GM23248 (cell line): ENCODE measurements at regions of chr1 and their contacts with region 1.

Region 1: DNA sequence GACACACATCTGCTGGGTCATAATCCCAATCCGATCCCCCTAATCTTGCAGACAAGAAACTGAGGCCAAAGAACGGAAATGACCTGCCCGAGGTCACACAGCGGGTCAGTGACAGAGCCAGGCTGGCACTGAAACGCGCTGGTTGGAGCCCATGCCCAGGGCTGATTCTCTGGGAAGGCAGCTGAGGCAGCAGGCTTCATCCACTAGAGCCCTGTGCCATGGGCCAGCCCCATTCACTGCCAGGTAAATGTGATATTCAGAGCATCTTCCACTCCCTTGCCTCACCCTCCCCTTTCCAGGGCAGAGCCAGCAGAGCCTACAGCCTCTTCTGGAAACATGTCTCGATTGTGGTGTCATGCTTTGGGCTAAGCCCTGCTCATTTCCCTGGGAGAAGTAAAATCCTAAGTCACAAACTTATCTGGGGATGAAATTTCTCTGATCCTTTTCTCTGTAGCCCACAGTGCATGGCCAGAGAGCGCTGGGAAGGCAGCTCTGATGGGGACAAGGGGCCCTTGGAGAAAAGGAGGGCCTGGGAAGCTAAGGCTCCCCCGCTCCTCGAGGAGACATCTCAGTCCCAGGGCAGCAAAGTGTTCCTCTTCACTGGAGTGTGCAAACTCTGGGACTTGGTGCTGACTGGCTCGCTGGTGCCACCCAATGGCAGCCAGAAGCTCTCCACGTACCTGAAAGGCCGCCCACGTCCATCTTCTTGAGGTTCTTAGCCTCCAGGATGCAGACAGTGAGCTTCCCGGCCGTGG is 110.4 kb downstream of the SYT2 start:
- DNase-seq: peak; percentile 89
- H3K4me3 ChIP-seq: no peak overlapping the region
- H3K27ac ChIP-seq: no peak overlapping the region
- H3K4me1 ChIP-seq: no peaks in the 10 kb centered on the region
- H3K27me3 ChIP-seq: no peaks in the 10 kb centered on the region

Region 2: GRCh38 chr1:202501281-202501680 is 98.6 kb before region 1 on chr1:
- in situ Hi-C with region 1: loop called (anchors 10 kb)
- DNase-seq: peak; percentile 41
- H3K4me3 ChIP-seq: no peak overlapping the region
- H3K27ac ChIP-seq: no peak overlapping the region
- H3K4me1 ChIP-seq: peaks cover 21% of the 10 kb centered on the region
- H3K27me3 ChIP-seq: no peaks in the 10 kb centered on the region